AG04450 (cell line): ENCODE measurements at regions of chr1 and their contacts with region 1.

Region 1: DNA sequence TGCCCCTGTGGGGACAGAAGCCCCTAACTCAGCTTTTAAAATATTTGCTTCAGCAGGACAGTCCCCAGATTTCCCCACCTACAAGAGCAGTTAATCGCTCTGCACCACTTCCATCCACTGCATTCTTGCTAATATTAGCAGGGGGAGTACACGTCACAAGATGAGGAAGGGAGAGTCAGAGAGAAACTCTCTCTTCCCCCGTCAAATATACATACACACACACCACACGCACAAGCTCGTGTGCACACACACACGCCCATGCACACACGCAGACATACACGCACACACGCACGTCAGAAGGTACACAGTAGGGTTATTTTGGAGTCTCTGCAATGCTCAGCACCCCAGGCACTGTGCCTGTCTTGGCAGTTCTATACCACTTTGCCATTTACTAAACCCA is 2.1 kb downstream of the CLCA1 start:
- DNase-seq: no peak
- H3K4me3 ChIP-seq: no peak overlapping the region
- H3K27ac ChIP-seq: no peak overlapping the region
- H3K27me3 ChIP-seq: peaks cover 6% of the 10 kb centered on the region
- CTCF ChIP-seq: no peak

Region 2: GRCh38 chr1:86441581-86441980 is 29.3 kb before region 1 on chr1:
- CTCF ChIA-PET with region 1: interaction called, 11 read pairs
- POLR2A ChIA-PET with region 1: no interaction called
- DNase-seq: no peak
- H3K4me3 ChIP-seq: no peak overlapping the region
- H3K27ac ChIP-seq: no peak overlapping the region
- H3K27me3 ChIP-seq: no peaks in the 10 kb centered on the region
- CTCF ChIP-seq: no peak

Region 3: DNA sequence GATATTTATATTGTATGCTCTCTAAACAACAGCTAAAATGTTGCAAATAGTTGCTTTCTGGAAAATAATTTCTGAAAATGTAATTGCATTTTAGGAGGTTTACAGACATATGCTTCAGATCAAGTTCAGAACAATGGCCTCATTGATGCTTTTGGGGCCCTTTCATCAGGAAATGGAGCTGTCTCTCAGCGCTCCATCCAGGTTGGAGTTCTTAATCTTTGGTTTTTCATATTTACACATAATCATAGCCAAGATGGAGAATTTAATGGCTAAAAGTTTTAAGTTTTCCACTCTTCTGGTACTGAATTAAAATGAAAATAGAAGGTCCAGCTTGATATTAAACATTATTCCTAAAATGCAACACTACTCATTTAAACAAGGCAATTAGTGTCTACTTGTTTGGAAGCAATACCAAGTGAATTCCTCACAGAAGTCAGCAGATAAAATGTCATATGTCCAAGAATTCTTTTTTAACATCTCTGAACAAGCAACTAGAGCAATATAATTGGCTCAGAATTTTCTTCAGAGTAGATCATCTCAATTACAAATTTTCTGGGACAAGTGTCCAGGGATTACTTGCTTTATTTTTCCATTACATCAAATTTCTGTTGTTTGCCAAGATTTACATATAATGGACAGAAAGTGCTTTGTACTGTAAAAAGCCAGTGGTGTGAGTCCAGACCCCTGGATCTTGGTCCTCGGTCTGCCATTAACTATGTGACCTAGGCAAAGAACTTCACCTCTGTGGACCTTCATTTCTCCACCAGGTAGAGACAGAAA is 20.5 kb after region 1 on chr1:
- CTCF ChIA-PET with region 1: interaction called, 17 read pairs
- POLR2A ChIA-PET with region 1: no interaction called
- DNase-seq: no peak
- H3K4me3 ChIP-seq: no peak overlapping the region
- H3K27ac ChIP-seq: no peak overlapping the region
- H3K27me3 ChIP-seq: peaks cover 13% of the 10 kb centered on the region
- CTCF ChIP-seq: no peak

Region 4: DNA sequence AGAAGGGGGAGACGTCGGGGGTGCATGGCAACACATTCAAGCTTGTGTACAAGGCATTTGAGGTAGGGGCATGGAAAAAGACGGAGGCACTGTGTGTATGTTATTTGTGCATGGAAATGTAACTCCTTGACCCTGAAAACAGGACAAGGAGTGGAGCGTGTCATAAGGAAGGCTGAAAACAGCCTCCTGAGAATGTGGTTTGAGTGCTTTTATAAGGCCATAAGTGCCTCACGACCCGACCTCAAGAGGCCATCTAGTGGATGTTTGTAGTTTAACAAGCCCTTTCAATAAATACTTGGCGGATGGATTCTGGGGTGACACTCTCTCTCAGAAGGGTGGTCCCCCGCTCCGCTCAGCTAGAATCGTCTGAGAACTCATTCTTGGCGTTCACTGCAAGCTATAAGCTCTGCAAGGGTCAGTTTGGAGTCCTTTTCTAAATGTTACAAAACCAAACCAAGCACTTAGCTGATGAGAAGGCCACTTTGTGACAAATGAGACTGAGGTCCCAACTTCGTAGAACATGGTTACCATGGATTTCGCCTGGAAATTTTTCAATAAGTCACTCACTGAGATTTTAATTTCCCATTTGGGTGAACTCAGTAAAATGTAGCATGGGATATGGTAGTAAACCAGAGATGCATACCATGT is 37.2 kb after region 1 on chr1:
- CTCF ChIA-PET with region 1: interaction called, 36 read pairs
- POLR2A ChIA-PET with region 1: no interaction called
- DNase-seq: peak; percentile 11
- H3K4me3 ChIP-seq: no peak overlapping the region
- H3K27ac ChIP-seq: no peak overlapping the region
- H3K27me3 ChIP-seq: peaks cover 8% of the 10 kb centered on the region
- CTCF ChIP-seq: peak; percentile 52

Region 5: GRCh38 chr1:86741947-86742572 is 271.2 kb after region 1 on chr1:
- CTCF ChIA-PET with region 1: interaction called, 21 read pairs
- POLR2A ChIA-PET with region 1: no interaction called
- DNase-seq: no peak
- H3K4me3 ChIP-seq: no peak overlapping the region
- H3K27ac ChIP-seq: no peak overlapping the region
- H3K27me3 ChIP-seq: no peaks in the 10 kb centered on the region
- CTCF ChIP-seq: peak; percentile 59